Pancreas (tissue), 10 donors: ENCODE measurements at regions of chr11 and their contacts with region 1.

Region 1: GRCh38 chr11:75867775-75868374 is 52.9 kb downstream of the UVRAG start:
- DNase-seq: peak in 1 of 6 donors; percentile 37
- ATAC-seq: peak; percentile 82 to 89 (median 86)
- H3K4me3 ChIP-seq: no peak overlapping the region
- H3K27ac ChIP-seq: no peak overlapping the region
- H3K4me1 ChIP-seq: peaks cover 16 to 44% (median 26%) of the 10 kb centered on the region in 3 donors
- H3K27me3 ChIP-seq: no peaks in the 10 kb centered on the region
- CTCF ChIP-seq: peak; percentile 63 to 79 (median 73)

Region 2: GRCh38 chr11:75802913-75803820 is 64.7 kb before region 1 on chr11:
- intact Hi-C with region 1: loop called in 2 of 3 experiments (anchors 5 to 10 kb)
- DNase-seq: peak in 5 of 6 donors; percentile 48 to 80 (median 68)
- ATAC-seq: peak; percentile 84 to 97 (median 92)
- H3K4me3 ChIP-seq: no peak overlapping the region
- H3K27ac ChIP-seq: no peak overlapping the region
- H3K4me1 ChIP-seq: no peaks in the 10 kb centered on the region
- H3K27me3 ChIP-seq: no peaks in the 10 kb centered on the region
- CTCF ChIP-seq: peak; percentile 76 to 90 (median 88)